Pancreas (tissue), 10 donors: ENCODE measurements at regions of chrX and their contacts with region 1.

Region 1: GRCh38 chrX:7996414-7996813 is 69.2 kb upstream of the PNPLA4 start:
- DNase-seq: peak in 2 of 6 donors; percentile 3 to 34
- ATAC-seq: peak in 3 of 4 donors; percentile 69 to 81 (median 73)
- H3K4me3 ChIP-seq: no peak overlapping the region
- H3K27ac ChIP-seq: no peak overlapping the region
- H3K4me1 ChIP-seq: no peaks in the 10 kb centered on the region
- H3K27me3 ChIP-seq: no peaks in the 10 kb centered on the region
- CTCF ChIP-seq: peak; percentile 20 to 62 (median 42)

Region 2: GRCh38 chrX:8738588-8739189 is 742.3 kb after region 1 on chrX:
- intact Hi-C with region 1: loop called in 2 of 3 experiments (anchors 5 to 10 kb)
- DNase-seq: peak in 1 of 6 donors; percentile 45
- ATAC-seq: peak in 3 of 4 donors; percentile 48 to 69 (median 59)
- H3K4me3 ChIP-seq: no peak overlapping the region
- H3K27ac ChIP-seq: no peak overlapping the region
- H3K4me1 ChIP-seq: no peaks in the 10 kb centered on the region
- H3K27me3 ChIP-seq: peaks cover 0 to 27% (median 0%) of the 10 kb centered on the region in 4 donors
- CTCF ChIP-seq: peak in 3 of 4 donors; percentile 45 to 56 (median 45)

Region 3: DNA sequence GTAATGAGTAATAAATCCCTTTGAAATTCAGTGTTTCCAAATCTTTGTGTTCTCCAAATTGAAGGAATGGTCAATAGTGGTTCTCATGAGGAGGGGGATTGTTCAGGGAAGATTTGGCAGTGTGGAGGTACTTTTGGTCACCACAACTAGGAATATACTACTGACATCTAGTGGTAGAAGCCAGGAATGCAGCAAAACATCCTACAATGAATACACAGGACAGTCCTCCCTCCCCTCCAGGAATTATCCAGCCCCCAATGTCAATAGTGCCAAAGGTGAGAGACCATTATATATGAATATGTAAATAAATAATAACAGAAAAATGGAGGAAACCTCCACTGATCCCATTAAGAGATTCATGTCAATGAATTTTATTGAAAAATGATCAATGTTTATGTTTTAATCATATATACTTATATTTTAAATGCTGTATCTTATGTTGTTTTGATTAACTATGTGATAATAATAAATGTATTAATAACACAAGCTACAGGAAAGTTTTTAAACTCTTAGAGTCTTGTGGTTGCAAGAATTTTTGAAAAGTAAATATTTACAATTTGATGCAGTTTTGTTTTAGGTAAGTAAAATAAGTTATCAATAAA is 819.2 kb after region 1 on chrX:
- intact Hi-C with region 1: loop called in 1 of 3 experiments (anchors 10 kb)
- DNase-seq: peak in 1 of 6 donors; percentile 14
- ATAC-seq: peak in 3 of 4 donors; percentile 67 to 72 (median 69)
- H3K4me3 ChIP-seq: no peak overlapping the region
- H3K27ac ChIP-seq: no peak overlapping the region
- H3K4me1 ChIP-seq: peaks cover 0 to 3% (median 0%) of the 10 kb centered on the region in 3 donors
- H3K27me3 ChIP-seq: peaks cover 0 to 10% (median 5%) of the 10 kb centered on the region in 4 donors
- CTCF ChIP-seq: peak; percentile 52 to 80 (median 66)